Sciatic nerve (tissue), 2 donors: ENCODE measurements at regions of chr12 and their contacts with region 1.

Region 1: DNA sequence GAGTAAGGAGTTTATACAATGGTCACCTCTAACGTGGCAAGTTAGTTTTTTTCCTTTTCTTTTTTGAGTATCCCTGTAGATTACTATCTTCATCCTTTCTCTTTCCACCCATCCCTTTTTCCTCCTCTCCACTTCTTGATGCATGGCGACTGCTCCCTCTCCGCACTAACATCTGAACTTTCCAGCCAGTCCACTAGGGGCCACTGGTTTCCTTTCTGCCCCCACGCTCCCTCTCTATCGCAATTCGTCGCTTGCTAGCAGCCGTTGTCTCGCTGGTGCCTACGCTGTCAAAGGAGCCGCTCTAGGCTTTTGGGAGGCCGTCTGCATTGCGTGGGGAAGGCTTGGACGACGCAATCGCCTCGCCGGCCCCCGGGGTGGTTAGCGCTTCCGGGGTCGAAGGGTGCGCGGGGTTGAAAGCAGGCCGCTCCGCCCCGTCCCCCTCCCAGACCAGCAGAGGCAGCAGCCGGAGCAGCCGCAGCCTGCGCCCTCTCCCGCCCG is at the start of gene PCBP2:
- DNase-seq: peak; percentile 98
- ATAC-seq: peak; percentile 98
- total RNA-seq, gene PCBP2: 772 TPM

Region 2: DNA sequence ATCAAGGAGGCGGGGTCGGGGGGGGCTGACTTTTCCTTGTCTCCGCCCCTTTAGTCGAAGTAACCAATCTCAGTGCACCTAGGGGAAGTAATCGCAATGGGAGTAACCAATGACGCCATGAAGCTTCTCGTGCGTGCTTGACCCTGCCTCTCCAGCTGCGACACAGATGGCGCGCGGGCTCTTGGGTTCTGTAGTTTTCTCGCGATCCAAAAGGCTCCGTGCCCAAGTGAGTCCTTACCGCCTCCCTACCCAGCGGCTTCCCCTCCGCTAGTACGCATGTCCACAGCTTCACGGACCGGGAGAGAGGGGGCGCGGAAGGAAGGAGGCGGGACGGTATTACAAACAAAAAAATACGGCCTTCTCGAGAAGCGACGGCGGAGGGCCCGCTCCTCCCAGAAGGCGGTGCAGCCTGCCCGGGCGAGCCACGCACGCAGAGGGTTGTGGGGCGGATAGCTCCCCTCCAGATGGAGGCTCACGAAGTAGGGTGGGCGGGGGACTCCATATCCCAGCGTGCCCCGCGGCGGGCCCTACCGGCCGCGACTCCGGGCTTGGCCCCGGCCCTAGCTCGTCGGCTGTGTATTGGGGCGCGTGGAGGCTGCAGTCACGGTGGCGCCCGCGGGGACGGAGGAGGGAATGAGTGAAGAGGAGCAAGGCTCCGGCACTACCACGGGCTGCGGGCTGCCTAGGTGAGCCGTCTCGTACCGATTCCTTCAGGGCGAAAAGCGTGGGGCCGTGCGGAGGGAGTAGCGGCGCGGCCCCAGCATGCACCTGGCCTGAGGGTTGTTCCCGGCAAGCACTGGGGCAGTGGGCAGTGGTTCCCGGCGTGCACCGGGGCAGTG is 49.3 kb after region 1 on chr12 and contains the start of gene TARBP2:
- intact Hi-C with region 1: loop called (anchors 10 kb)
- DNase-seq: peak; percentile 99
- ATAC-seq: peak; percentile 91
- total RNA-seq, gene TARBP2: 19.4 TPM

Region 3: GRCh38 chr12:53530920-53531319 is 79.2 kb after region 1 on chr12:
- intact Hi-C with region 1: no loop called
- DNase-seq: no peak
- ATAC-seq: no peak

Region 4: DNA sequence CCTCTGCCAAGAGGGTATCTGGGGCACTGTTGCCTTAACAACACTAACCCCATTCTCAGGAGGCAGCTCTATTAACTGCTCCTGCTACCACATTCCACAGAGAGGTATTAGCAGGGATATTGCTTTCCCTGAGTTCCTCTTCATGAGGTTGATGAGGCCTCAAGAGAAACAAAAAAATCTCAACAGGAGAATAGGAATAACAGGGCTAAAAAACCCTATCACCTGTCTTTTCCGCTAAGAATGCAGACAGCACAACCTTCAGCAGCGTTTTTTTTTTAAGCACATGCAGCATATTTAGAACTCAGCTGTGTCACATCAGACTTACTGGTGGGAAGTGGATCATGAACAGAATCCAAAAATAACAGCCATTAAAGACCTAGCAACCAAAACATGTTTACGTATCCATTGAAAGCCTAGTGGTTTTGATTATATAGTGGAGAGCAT is 145.2 kb after region 1 on chr12:
- intact Hi-C with region 1: no loop called
- DNase-seq: no peak
- ATAC-seq: peak; percentile 88

Region 5: DNA sequence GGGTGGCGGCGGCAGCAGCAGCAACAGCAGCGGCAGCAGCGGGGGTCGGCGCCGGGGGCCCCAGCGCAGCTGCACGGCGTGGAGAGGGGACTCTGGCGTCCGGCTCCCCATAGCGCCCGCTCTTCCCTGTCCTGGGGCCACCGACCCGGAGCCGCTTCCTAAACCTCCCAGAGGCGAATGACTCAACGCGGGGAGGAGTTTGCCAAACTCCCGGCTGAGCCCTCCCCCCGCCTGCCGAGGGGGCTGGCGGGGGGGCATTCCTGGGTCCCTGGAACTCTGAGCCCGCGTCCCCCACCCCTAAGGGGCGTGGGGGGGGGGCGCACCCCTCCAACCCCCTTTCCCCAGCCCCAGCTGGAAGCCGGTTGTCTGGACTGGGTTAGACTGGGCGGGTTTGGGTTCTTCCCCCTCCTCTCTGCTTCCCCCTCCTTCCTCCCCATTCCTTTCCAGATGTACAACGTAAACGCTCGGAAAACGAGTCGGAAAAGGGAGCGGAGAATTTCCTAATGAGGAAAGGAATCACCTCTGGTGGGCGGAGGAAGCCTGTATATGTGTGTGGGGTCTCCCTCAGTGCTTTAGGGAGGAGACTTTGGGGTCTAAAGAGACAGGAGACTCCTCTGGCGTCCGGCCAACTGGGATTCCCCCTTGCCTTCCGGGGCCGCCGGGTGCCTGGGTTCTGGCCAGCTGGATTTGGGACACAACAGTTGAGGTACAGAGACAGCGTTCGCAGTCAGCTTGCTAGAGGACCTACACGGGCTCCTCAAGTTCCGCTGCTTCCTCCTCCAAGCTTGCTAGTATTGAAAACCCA is 967.6 kb after region 1 on chr12 and contains the start of gene ITGA5:
- intact Hi-C with region 1: no loop called
- DNase-seq: peak; percentile 90
- ATAC-seq: peak; percentile 78
- total RNA-seq, gene ITGA5: 82.3 TPM